GM12878 (cell line): ENCODE measurements at regions of chrX and their contacts with region 1.

Region 1: DNA sequence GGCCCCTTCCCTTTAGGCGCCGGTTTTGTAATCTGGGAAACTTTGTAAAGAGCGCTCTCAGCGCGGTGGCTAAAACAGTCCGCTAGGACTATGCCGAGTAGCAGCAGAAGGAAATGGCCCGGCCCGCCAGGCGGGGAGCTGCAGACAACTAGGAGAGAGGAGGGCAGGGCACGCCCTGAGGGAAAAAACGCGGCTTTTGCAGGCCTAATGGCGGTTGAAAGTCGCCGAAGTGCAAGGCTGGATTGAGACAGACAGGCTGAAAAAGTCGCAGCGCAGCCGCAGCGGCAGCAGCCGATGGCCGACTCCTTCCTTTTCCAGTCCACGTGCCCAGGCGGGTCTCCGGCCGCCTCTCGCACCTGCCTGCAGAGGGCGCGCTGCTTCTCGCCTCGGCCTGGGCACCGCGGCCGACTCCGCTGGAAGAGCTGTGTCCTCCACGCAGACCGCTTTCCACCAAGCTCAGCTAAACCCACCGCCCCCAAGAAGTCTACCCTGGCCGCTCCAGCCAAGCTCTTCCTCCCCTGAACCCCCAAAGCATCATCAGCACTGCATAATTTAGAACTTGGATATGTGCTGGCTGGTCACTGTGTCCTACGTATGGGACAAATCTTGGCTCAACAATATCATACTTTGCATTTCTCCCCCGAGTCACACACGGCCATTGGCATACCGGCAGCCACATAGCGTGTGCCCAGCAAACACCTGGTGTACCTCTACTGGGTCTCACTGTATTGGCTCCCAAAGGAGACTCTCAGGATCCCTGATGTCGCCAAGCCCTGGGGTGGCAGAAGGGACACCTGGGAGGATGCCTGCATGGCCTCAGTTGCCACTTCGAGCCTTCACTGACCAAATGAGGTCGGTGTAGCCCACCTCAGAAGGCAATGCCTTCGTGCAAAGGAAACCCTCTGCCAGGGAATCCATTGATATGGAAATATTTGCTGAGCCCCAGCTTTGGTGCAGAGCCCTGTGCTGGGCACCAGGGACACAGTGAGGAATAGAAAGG is 14.5 kb downstream of the SLC25A5 start:
- DNase-seq: no peak
- ATAC-seq: peak; percentile 90
- H3K4me3 ChIP-seq: no peak overlapping the region; the same call in 1 of the 2 replicates
- H3K27ac ChIP-seq: no peak overlapping the region
- H3K4me1 ChIP-seq: no peaks in the 10 kb centered on the region; the same call in 1 of the 2 replicates
- H3K27me3 ChIP-seq: no peaks in the 10 kb centered on the region
- CTCF ChIP-seq: peak; percentile 50 to 60 (median 59)
- EP300 ChIP-seq: no peak
- POLR2A ChIP-seq: peak; percentile 39; the same call in 1 of the 2 replicates
- RAD21 ChIP-seq: no peak

Region 2: GRCh38 chrX:119468930-119469635 is 13.7 kb before region 1 on chrX:
- CTCF ChIA-PET with region 1: interaction called, 12 read pairs
- POLR2A ChIA-PET with region 1: interaction called, 21 read pairs
- RAD21 ChIA-PET with region 1: interaction called, 10 read pairs
- SMC1A ChIA-PET with region 1: interaction called, 5 read pairs
- in situ Hi-C with region 1: no loop called
- intact Hi-C with region 1: no loop called
- DNase-seq: peak; percentile 35
- ATAC-seq: peak; percentile 84
- H3K4me3 ChIP-seq: peak overlapping the region; percentile 81
- H3K27ac ChIP-seq: peak overlapping the region; percentile 82
- H3K4me1 ChIP-seq: no peaks in the 10 kb centered on the region; the same call in 1 of the 2 replicates
- H3K27me3 ChIP-seq: no peaks in the 10 kb centered on the region
- CTCF ChIP-seq: peak; percentile 61 to 81 (median 64); a peak in 5 of 6 replicates
- EP300 ChIP-seq: no peak
- POLR2A ChIP-seq: no peak; the same call in 1 of the 2 replicates
- RAD21 ChIP-seq: peak; percentile 56

Region 3: DNA sequence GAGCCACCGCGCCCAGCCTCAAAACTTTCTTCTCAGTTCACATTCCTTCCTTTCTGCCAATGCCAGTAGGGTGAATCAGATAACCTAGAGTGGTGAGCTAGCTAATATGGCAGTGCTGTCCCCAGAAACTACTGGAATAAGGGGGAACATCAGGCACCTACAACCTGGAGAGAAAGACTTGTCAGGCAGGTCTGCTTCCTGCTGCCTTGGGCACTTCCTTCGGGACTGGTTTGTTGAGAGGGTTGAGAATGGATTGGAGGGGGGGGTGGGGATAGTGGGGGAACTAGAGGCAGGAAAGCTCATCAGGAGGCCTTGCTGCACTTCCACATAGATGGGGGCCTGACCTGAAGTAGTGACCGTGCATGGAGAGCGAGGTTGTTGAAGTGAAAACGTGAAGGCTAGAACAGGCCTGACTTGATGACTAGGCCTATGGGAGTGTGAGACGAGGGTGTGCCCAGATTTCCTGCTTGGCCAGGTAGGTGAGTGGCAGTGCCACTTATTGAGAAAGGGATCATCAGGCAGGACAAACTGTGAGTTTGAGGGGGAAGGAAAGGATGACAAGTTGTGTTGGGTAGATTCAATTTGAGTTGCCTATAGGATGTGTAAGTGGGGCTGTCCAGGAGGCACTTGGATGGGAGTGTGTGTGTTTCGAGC is 18.9 kb after region 1 on chrX:
- CTCF ChIA-PET with region 1: interaction called, 14 read pairs
- POLR2A ChIA-PET with region 1: interaction called, 5 read pairs
- RAD21 ChIA-PET with region 1: interaction called, 4 read pairs
- SMC1A ChIA-PET with region 1: interaction called, 3 read pairs
- in situ Hi-C with region 1: no loop called
- intact Hi-C with region 1: no loop called
- DNase-seq: no peak
- ATAC-seq: no peak
- H3K4me3 ChIP-seq: no peak overlapping the region
- H3K27ac ChIP-seq: no peak overlapping the region
- H3K4me1 ChIP-seq: no peaks in the 10 kb centered on the region
- H3K27me3 ChIP-seq: no peaks in the 10 kb centered on the region
- CTCF ChIP-seq: no peak
- EP300 ChIP-seq: no peak
- POLR2A ChIP-seq: no peak
- RAD21 ChIP-seq: no peak

Region 4: DNA sequence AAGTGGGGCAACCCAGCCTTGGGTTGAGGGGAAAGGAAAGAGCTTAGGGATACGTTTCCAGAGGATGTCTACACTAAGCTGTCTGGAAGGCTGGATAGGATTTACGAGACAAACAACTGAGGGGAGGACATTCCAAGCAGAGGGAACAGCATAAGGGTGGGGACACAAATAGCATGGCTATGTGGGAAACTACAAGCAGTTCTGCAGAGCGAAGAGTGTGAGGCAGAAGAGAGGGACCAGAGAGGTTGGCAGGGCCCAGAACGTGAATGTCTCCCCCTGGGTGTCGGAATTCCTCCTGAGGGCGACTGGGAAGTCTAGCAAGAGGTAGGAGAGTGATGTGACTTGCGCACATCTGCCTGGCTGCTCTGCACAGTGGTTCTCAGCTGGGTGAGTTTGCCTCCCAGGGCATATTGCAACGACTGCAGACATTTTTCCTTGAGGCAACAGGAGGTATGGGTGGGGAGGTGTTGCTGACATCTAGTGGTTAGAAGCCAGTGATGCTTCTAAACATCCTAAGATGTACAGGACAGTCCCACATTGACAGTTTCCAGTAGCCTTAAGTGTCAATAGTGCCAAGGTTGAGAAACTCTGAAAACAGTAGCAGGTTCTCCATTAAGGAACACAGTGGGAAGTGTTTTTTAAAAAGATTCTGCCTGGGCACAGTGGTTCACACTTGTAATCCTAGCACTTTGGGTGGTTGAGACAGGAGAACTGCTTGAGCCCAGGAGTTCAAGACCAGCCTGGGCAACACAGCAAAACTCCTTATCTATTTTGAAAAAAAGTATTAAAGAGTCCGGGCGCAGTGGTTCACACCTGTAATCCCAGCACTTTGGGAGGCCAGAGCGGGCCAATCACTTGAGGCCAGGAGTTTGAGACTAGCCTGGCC is 398.0 kb after region 1 on chrX:
- CTCF ChIA-PET with region 1: interaction called, 3 read pairs
- POLR2A ChIA-PET with region 1: no interaction called
- RAD21 ChIA-PET with region 1: no interaction called
- SMC1A ChIA-PET with region 1: no interaction called
- in situ Hi-C with region 1: no loop called
- intact Hi-C with region 1: loop called (anchors 10 kb)
- DNase-seq: peak; percentile 35
- ATAC-seq: peak; percentile 98
- H3K4me3 ChIP-seq: no peak overlapping the region
- H3K27ac ChIP-seq: no peak overlapping the region
- H3K4me1 ChIP-seq: peaks cover 10% of the 10 kb centered on the region
- H3K27me3 ChIP-seq: no peaks in the 10 kb centered on the region
- CTCF ChIP-seq: peak; percentile 76 to 82 (median 77)
- EP300 ChIP-seq: no peak
- POLR2A ChIP-seq: no peak
- RAD21 ChIP-seq: peak; percentile 76